ENCODE measurements at regions of chr19 and their contacts with region 1.

Region 1: GRCh38 chr19:50368649-50369570 is 3.5 kb upstream of the NAPSA start:
- DNase-seq: peak; percentile 92
- ATAC-seq: peak; percentile 86
- H3K4me3 Mint-ChIP-seq: peak overlapping the region; percentile 88
- H3K27ac Mint-ChIP-seq: peak overlapping the region; percentile 96
- H3K4me1 Mint-ChIP-seq: peaks cover 2% of the 10 kb centered on the region; the same call in 1 of the 2 replicates
- H3K27me3 Mint-ChIP-seq: peaks cover 5% of the 10 kb centered on the region
- CTCF ChIP-seq: peak; percentile 83

Region 2: GRCh38 chr19:50357178-50358100 is 11.5 kb before region 1 on chr19:
- CTCF ChIA-PET with region 1: interaction called, 33 read pairs
- POLR2A ChIA-PET with region 1: no interaction called
- DNase-seq: peak; percentile 86
- ATAC-seq: peak; percentile 86
- H3K4me3 Mint-ChIP-seq: no peak overlapping the region; the same call in 1 of the 2 replicates
- H3K27ac Mint-ChIP-seq: no peak overlapping the region
- H3K4me1 Mint-ChIP-seq: peaks cover 2% of the 10 kb centered on the region; the same call in 1 of the 2 replicates
- H3K27me3 Mint-ChIP-seq: peaks cover 21% of the 10 kb centered on the region
- CTCF ChIP-seq: peak; percentile 78

Region 3: GRCh38 chr19:50383852-50384684 is 15.2 kb after region 1 on chr19 and contains the start of gene POLD1:
- CTCF ChIA-PET with region 1: interaction called, 17 read pairs
- POLR2A ChIA-PET with region 1: no interaction called
- DNase-seq: peak; percentile 99
- ATAC-seq: peak; percentile 90
- H3K4me3 Mint-ChIP-seq: peak within 1 kb of the TSS; percentile 92
- H3K27ac Mint-ChIP-seq: peak within 1 kb of the TSS; percentile 91
- H3K4me1 Mint-ChIP-seq: peaks cover 21% of the 10 kb centered on the region
- H3K27me3 Mint-ChIP-seq: no peaks in the 10 kb centered on the region
- CTCF ChIP-seq: no peak
- total RNA-seq, gene POLD1: 163 to 179 TPM (median 178 TPM) in 3 replicates

Region 4: GRCh38 chr19:50414864-50415660 is 46.2 kb after region 1 on chr19:
- CTCF ChIA-PET with region 1: interaction called, 14 read pairs
- POLR2A ChIA-PET with region 1: no interaction called
- DNase-seq: peak; percentile 95
- ATAC-seq: peak; percentile 83
- H3K4me3 Mint-ChIP-seq: no peak overlapping the region
- H3K27ac Mint-ChIP-seq: no peak overlapping the region
- H3K4me1 Mint-ChIP-seq: peaks cover 18% of the 10 kb centered on the region
- H3K27me3 Mint-ChIP-seq: no peaks in the 10 kb centered on the region; the same call in 1 of the 2 replicates
- CTCF ChIP-seq: peak; percentile 93

Region 5: GRCh38 chr19:50427997-50428425 is 59.1 kb after region 1 on chr19:
- CTCF ChIA-PET with region 1: interaction called, 10 read pairs
- POLR2A ChIA-PET with region 1: no interaction called
- DNase-seq: peak; percentile 81
- ATAC-seq: peak; percentile 31
- H3K4me3 Mint-ChIP-seq: peak overlapping the region; percentile 47
- H3K27ac Mint-ChIP-seq: no peak overlapping the region
- H3K4me1 Mint-ChIP-seq: peaks cover 21% of the 10 kb centered on the region
- H3K27me3 Mint-ChIP-seq: peaks cover 35% of the 10 kb centered on the region
- CTCF ChIP-seq: no peak

Region 6: GRCh38 chr19:50478901-50479736 is 110.2 kb after region 1 on chr19:
- CTCF ChIA-PET with region 1: interaction called, 20 read pairs
- POLR2A ChIA-PET with region 1: no interaction called
- DNase-seq: peak; percentile 77
- ATAC-seq: peak; percentile 18
- H3K4me3 Mint-ChIP-seq: no peak overlapping the region
- H3K27ac Mint-ChIP-seq: no peak overlapping the region
- H3K4me1 Mint-ChIP-seq: peaks cover 9% of the 10 kb centered on the region
- H3K27me3 Mint-ChIP-seq: no peaks in the 10 kb centered on the region; the same call in 1 of the 2 replicates
- CTCF ChIP-seq: peak; percentile 37; the same call in 1 of the 2 replicates

Measured in WTC11 (cell line).